ENCODE measurements at regions of chr1 and their contacts with region 1.

Region 1: DNA sequence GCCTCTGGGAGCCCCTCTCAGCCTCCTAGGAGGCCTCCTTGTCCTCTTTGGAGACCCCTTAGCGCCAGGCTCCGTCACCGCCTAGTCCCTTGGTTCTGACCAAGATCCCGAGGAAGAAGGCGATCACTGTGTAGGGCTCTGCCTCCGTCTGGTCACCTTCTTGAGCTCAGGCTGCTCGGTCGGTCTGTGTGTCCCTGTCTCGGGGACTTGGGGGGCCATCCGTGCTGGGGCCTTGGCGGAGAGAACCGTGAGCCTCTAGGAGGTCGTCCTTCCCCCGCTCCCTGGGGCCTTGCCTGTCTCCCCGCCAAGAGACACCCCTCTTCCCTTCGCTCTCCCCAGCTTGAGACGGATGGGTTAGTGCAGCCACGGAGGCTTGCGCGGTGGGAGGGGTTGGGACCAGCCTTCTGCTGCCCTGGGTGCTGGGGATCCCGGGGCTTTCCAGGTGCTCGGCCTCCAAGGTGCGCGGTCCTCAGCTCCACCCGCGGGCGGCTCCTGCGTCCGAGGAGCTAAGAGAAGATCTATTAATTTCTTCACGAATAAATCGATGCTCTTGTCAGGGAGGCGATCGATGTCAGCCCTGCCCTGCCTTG is 701 bp upstream of the INSRR start:
- DNase-seq: peak in 1 of 5 donors; percentile 64
- H3K4me3 ChIP-seq: peak overlapping the region in 1 of 3 donors; percentile 25
- H3K27ac ChIP-seq: no peak overlapping the region
- H3K4me1 ChIP-seq: peaks cover 0 to 10% (median 0%) of the 10 kb centered on the region in 3 donors
- H3K27me3 ChIP-seq: peaks cover 24% of the 10 kb centered on the region
- CTCF ChIP-seq: no peak

Region 2: DNA sequence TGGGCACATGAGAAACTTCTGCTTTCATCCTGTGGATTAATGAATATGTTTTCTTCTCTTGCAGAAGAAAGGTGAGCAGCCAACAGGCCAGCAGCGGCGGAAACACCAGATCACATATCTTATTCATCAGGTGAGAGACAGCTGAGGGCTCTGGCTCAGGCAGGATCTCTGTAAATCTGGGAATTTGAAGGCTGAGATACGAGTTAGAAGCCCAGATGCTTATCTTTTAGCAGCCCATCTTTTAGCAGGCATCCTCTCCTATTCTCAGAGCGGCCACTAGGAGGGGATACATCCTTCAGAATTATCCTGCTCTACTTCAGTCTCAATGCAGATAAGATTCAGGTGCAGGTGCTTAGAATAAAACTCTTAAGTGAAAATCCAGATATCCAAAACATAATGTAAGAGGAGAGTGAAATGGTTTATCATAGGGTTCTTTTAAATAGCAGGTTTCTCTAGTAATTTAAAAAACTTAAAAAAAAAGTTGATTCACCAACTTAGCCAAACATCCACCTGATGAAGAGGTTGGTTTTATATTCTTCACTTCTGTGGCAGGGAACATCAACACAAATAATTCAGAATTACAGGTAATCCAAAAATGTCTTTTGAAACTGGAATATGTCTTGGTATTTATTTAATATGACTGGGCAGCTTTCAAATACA is 62.3 kb before region 1 on chr1:
- intact Hi-C with region 1: loop called (anchors 10 kb)
- DNase-seq: peak in 4 of 5 donors; percentile 65 to 78 (median 72)
- H3K4me3 ChIP-seq: no peak overlapping the region
- H3K27ac ChIP-seq: no peak overlapping the region
- H3K4me1 ChIP-seq: no peaks in the 10 kb centered on the region
- H3K27me3 ChIP-seq: no peaks in the 10 kb centered on the region
- CTCF ChIP-seq: peak; percentile 61

Region 3: GRCh38 chr1:156927215-156928042 is 67.8 kb after region 1 on chr1:
- intact Hi-C with region 1: no loop called
- DNase-seq: peak; percentile 85 to 91 (median 88)
- H3K4me3 ChIP-seq: no peak overlapping the region
- H3K27ac ChIP-seq: no peak overlapping the region
- H3K4me1 ChIP-seq: peaks cover 0 to 2% (median 0%) of the 10 kb centered on the region in 3 donors
- H3K27me3 ChIP-seq: peaks cover 30% of the 10 kb centered on the region
- CTCF ChIP-seq: peak; percentile 57

Region 4: GRCh38 chr1:157363660-157364140 is 504.1 kb after region 1 on chr1:
- intact Hi-C with region 1: no loop called
- DNase-seq: peak in 3 of 5 donors; percentile 14 to 29 (median 17)
- H3K4me3 ChIP-seq: no peak overlapping the region
- H3K27ac ChIP-seq: no peak overlapping the region
- H3K4me1 ChIP-seq: no peaks in the 10 kb centered on the region
- H3K27me3 ChIP-seq: no peaks in the 10 kb centered on the region
- CTCF ChIP-seq: peak; percentile 56